MCF 10A (cell line): ENCODE measurements at regions of chr11 and their contacts with region 1.

Region 1: DNA sequence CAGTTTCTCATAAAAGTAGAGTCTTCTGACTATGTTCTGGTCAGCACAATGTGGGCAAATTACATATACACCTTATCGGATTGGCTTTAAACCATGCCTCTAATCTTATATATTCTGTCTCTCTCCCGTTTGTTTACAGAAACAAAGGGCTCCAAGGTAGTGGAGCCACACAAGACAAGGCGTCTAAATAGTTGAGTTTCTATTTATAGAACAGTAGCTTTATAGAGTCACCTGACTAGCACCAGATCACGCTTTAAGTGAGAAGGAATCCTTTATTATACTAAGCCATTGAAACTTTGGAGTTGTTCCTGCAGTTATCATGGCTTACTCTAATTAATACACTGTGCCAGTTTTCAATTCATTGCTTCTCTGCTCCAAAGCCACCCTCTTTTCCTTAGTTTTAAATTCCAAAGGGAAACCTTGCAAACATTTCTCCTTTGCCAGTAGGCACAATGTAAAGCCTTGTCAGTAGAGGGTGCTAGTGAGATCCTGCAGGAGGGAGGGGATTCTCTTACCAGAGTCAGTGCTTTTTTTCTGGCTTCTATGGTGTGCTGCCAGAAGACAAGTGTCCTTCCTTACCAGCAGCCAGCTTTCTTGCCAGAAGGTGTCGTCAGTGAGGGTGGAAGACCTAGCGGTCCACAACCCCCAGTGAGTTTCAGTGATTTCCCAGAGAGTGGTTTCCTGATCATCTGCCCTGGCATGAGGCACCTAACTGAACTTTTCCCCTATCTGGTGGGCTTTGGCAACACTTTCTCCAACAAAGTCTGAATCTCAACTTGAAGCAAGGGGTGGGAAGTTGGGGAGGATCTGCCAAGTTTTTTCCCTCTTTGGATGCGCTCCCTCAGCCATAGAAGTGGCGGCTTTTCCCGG is 71.7 kb downstream of the RAB38 start:
- DNase-seq: peak; percentile 82
- H3K4me3 Mint-ChIP-seq: no peak overlapping the region
- H3K27ac Mint-ChIP-seq: no peak overlapping the region
- H3K4me1 Mint-ChIP-seq: peaks cover 23% of the 10 kb centered on the region
- H3K27me3 Mint-ChIP-seq: no peaks in the 10 kb centered on the region
- CTCF ChIP-seq: peak; percentile 51

Region 2: GRCh38 chr11:87463486-87464102 is 640.0 kb before region 1 on chr11:
- CTCF ChIA-PET with region 1: interaction called, 3 read pairs
- POLR2A ChIA-PET with region 1: no interaction called
- intact Hi-C with region 1: loop called (anchors 10 kb)
- DNase-seq: peak; percentile 65
- H3K4me3 Mint-ChIP-seq: no peak overlapping the region
- H3K27ac Mint-ChIP-seq: no peak overlapping the region
- H3K4me1 Mint-ChIP-seq: no peaks in the 10 kb centered on the region
- H3K27me3 Mint-ChIP-seq: no peaks in the 10 kb centered on the region
- CTCF ChIP-seq: peak; percentile 61

Region 3: GRCh38 chr11:88179971-88180629 is 76.5 kb after region 1 on chr11:
- CTCF ChIA-PET with region 1: interaction called, 4 read pairs
- POLR2A ChIA-PET with region 1: interaction called, 4 read pairs
- intact Hi-C with region 1: loop called (anchors 2 kb)
- DNase-seq: peak; percentile 88
- H3K4me3 Mint-ChIP-seq: peak overlapping the region; percentile 30
- H3K27ac Mint-ChIP-seq: peak overlapping the region; percentile 76
- H3K4me1 Mint-ChIP-seq: peaks cover 43% of the 10 kb centered on the region
- H3K27me3 Mint-ChIP-seq: no peaks in the 10 kb centered on the region
- CTCF ChIP-seq: no peak

Region 4: DNA sequence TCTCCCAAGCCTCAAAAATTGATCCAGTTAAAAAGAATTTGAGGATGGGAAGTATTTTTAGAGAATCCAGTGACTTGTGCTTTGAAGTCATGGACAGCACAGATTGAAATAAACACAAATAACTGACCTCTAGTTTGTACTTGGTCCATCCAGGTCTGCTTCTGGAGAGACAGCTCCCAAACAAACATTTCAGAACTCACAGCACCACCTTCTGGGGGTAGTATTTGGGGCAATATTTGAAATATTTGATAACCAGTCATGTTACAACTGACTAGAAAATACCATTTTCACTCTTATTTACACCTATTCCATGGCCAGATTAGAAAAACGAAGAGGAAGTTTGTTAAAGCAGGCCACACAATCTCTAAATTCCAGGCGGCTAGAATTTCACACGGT is 177.7 kb after region 1 on chr11:
- CTCF ChIA-PET with region 1: no interaction called
- POLR2A ChIA-PET with region 1: no interaction called
- intact Hi-C with region 1: loop called (anchors 2 kb)
- DNase-seq: peak; percentile 33
- H3K4me3 Mint-ChIP-seq: no peak overlapping the region
- H3K27ac Mint-ChIP-seq: no peak overlapping the region
- H3K4me1 Mint-ChIP-seq: peaks cover 7% of the 10 kb centered on the region
- H3K27me3 Mint-ChIP-seq: no peaks in the 10 kb centered on the region
- CTCF ChIP-seq: peak; percentile 28